ENCODE measurements at regions of chr10 and their contacts with region 1.

Region 1: GRCh38 chr10:73997787-73998622 is at the start of gene VCL:
- DNase-seq: peak; percentile 98
- ATAC-seq: peak; percentile 96 to 97 (median 97)
- H3K4me3 ChIP-seq: peak within 1 kb of the TSS; percentile 82 to 99 (median 90)
- H3K27ac ChIP-seq: peak within 1 kb of the TSS; percentile 68 to 97 (median 93)
- H3K4me1 ChIP-seq: peaks cover 6 to 47% (median 34%) of the 10 kb centered on the region in 9 donors
- H3K27me3 ChIP-seq: no peaks in the 10 kb centered on the region
- CTCF ChIP-seq: peak in 1 of 9 donors; percentile 14
- total RNA-seq, gene VCL: 210 to 369 (median 251) TPM

Region 2: DNA sequence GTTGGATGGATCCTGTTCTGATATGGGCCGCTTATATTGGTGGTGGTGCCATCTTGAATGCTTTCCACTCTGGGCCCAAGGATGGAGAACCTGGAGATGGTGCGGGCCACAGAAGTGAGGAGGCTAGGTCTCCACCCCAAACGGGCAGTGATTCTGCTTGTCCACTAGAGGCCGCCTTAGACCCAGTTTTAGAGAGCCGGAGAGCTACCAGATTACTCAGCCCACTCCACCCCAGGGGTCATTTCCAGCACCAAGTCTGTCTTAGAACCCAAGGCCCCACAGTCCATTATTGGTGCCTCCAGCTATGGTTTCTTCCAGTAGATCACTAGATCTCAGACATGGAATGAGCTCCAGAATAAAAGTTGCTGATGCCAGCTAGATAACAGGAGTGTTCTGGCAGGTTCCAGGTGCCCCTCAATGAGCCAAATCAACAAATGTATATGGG is 111.9 kb before region 1 on chr10:
- intact Hi-C with region 1: loop called in 2 of 10 experiments (anchors 5 kb)
- DNase-seq: peak; percentile 48 to 88
- ATAC-seq: peak; percentile 77 to 90 (median 86)
- H3K4me3 ChIP-seq: no peak overlapping the region
- H3K27ac ChIP-seq: peak overlapping the region in 9 of 10 donors; percentile 72 to 92 (median 87)
- H3K4me1 ChIP-seq: peaks cover 26 to 34% (median 31%) of the 10 kb centered on the region in 9 donors
- H3K27me3 ChIP-seq: no peaks in the 10 kb centered on the region
- CTCF ChIP-seq: peak; percentile 57 to 93 (median 86)

Region 3: GRCh38 chr10:73956476-73957359 is 41.3 kb before region 1 on chr10:
- intact Hi-C with region 1: loop called in 1 of 10 experiments (anchors 1 kb)
- DNase-seq: no peak
- ATAC-seq: peak; percentile 53 to 78 (median 70)
- H3K4me3 ChIP-seq: no peak overlapping the region
- H3K27ac ChIP-seq: peak overlapping the region in 9 of 10 donors; percentile 21 to 74 (median 61)
- H3K4me1 ChIP-seq: peaks cover 5 to 60% (median 11%) of the 10 kb centered on the region in 9 donors
- H3K27me3 ChIP-seq: no peaks in the 10 kb centered on the region
- CTCF ChIP-seq: no peak

Region 4: GRCh38 chr10:74039561-74040145 is 41.6 kb after region 1 on chr10:
- intact Hi-C with region 1: loop called in 3 of 10 experiments (anchors 5 kb)
- DNase-seq: peak in 1 of 2 donors; percentile 62
- ATAC-seq: peak; percentile 48 to 90 (median 84)
- H3K4me3 ChIP-seq: no peak overlapping the region
- H3K27ac ChIP-seq: peak overlapping the region; percentile 36 to 83 (median 57)
- H3K4me1 ChIP-seq: peaks cover 8 to 59% (median 55%) of the 10 kb centered on the region in 9 donors
- H3K27me3 ChIP-seq: no peaks in the 10 kb centered on the region
- CTCF ChIP-seq: no peak

Region 5: DNA sequence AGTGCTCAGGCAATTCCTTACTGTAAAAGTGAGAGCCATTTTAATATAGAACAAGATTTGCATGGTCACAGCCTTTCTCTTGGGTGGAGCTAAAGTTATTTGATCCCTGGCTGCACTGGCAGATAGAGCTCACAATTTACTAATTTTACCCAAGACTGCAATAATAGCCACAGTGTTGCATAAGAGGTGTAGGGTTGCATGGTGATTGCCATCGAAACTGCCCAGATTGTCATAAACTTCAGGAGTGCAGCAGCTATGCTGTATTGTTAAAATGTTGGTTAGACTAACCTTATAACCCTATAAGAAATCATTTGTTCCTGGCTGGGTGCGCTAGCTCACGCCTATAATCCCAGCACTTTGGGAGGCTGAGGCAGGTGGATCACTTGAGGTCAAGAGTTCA is 49.9 kb after region 1 on chr10:
- intact Hi-C with region 1: loop called in 5 of 10 experiments (anchors 5 to 10 kb)
- DNase-seq: no peak
- ATAC-seq: peak in 3 of 8 donors; percentile 13 to 24 (median 15)
- H3K4me3 ChIP-seq: no peak overlapping the region
- H3K27ac ChIP-seq: peak overlapping the region in 7 of 10 donors; percentile 15 to 68 (median 49)
- H3K4me1 ChIP-seq: peaks cover 2 to 86% (median 65%) of the 10 kb centered on the region in 9 donors
- H3K27me3 ChIP-seq: no peaks in the 10 kb centered on the region
- CTCF ChIP-seq: no peak

Region 6: DNA sequence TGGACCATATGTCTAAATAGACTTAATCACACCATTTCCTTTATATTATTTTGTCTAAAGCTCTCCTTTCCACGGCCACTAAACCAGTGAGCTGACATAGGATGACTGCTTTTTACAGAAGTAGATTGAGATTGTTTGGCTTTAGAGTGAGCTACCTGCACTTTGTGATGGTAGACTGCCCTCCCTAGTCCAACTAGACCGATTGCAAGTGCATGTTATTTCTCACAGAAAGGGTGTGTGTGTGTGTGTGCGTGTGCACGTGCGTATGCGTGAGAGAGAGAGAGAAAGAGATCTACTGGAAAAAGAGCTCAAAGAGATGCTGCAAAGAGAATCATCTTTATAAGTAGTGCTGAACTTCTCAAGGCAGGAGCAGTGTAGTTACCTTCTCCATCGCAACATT is 60.7 kb after region 1 on chr10:
- intact Hi-C with region 1: loop called in 2 of 10 experiments (anchors 5 to 10 kb)
- DNase-seq: no peak
- ATAC-seq: peak in 5 of 8 donors; percentile 18 to 62 (median 34)
- H3K4me3 ChIP-seq: no peak overlapping the region
- H3K27ac ChIP-seq: peak overlapping the region in 5 of 10 donors; percentile 16 to 83 (median 74)
- H3K4me1 ChIP-seq: peaks cover 3 to 66% (median 52%) of the 10 kb centered on the region in 9 donors
- H3K27me3 ChIP-seq: no peaks in the 10 kb centered on the region
- CTCF ChIP-seq: peak in 6 of 9 donors; percentile 12 to 46 (median 28)